ENCODE measurements at regions of chr18 and their contacts with region 1.

Region 1: DNA sequence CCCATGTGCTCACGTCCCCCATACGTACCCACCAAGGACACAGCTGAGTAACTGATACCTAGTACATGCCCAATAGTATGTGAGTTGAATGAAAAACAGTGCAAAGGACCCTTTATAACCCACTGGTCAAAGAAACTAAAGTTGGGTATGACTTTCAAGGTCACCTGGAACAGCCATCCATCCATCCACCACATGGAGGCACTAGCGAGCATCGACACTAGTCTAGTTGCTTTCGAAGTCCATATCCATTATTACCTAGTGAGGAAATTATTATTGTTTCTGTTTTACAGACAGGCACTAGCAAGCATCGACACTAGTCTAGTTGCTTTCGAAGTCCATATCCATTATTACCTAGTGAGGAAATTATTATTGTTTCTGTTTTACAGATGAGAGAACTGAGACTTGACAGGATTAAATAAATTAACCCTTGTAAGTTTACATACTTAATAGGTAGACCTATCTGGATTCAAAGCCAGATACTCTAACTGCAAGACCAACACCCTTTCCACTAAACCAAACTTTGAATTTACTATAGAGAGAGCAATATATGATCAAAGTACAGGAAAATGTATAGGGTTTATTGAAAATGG is 233.7 kb downstream of the METTL4 start:
- DNase-seq: peak in 1 of 2 donors; percentile 66
- ATAC-seq: no peak
- H3K4me3 ChIP-seq: no peak overlapping the region
- H3K4me3 Mint-ChIP-seq: no peak overlapping the region
- H3K27ac ChIP-seq: no peak overlapping the region
- H3K27ac Mint-ChIP-seq: no peak overlapping the region
- H3K4me1 ChIP-seq: no peaks in the 10 kb centered on the region
- H3K4me1 Mint-ChIP-seq: no peaks in the 10 kb centered on the region
- H3K27me3 ChIP-seq: no peaks in the 10 kb centered on the region
- H3K27me3 Mint-ChIP-seq: peaks cover 0 to 19% of the 10 kb centered on the region in 2 donors
- CTCF ChIP-seq: peak; percentile 37

Region 2: GRCh38 chr18:2409906-2410305 is 72.3 kb after region 1 on chr18:
- intact Hi-C with region 1: loop called (anchors 2 kb)
- DNase-seq: no peak
- ATAC-seq: no peak
- H3K4me3 ChIP-seq: no peak overlapping the region
- H3K4me3 Mint-ChIP-seq: no peak overlapping the region
- H3K27ac ChIP-seq: no peak overlapping the region
- H3K27ac Mint-ChIP-seq: no peak overlapping the region
- H3K4me1 ChIP-seq: no peaks in the 10 kb centered on the region
- H3K4me1 Mint-ChIP-seq: no peaks in the 10 kb centered on the region
- H3K27me3 ChIP-seq: no peaks in the 10 kb centered on the region
- H3K27me3 Mint-ChIP-seq: peaks cover 0 to 3% of the 10 kb centered on the region in 2 donors
- CTCF ChIP-seq: no peak